Naive thymus-derived CD4-positive, alpha-beta T cell (primary cell): ENCODE measurements at regions of chr14 and their contacts with region 1.

Region 1: DNA sequence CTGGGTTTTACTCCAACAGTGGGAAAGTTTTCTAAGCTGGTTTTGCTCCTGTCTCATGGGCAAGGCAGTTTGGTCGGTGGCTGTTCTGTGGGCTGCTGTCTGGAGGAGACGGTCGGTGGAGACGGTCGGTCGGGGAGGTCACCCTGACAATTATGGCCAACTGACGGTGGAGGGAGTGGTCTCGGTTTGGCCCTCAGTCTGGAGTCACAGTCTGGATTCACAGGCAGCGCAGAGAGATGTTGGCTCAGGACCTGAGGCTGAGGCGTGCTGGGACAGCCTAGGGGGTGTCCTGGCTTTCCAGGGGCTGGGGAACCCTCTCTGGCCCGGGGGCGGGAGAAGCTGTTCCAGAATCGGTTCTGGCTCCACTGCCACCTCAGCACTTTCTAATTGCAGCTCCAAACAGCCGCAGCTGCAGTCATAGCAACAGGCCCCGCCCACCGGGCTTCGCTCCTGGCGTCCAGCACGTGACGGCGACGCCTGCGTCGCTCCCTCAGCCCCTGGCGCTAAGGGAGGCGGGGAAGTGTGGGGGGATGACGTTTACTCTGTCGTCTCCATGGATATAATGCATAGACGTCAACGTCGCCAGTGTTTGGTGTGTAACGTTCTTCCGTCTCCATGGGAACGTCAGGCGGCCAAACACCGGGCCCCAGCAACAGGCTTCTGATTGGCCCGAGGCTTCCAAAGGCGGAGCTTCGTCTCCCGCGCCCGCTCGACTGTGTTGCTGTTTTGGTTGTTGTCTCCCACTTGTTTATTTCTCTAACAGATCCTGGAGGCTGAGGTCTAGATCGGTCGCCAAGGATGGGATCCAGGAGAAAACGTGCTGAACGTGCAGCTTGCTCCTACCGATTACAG is 19.8 kb upstream of the FOS start:
- DNase-seq: peak; percentile 97 to 100 (median 100)
- ATAC-seq: peak; percentile 94
- H3K4me3 ChIP-seq: peak overlapping the region; percentile 75
- H3K4me3 Mint-ChIP-seq: peak overlapping the region; percentile 75 to 95 (median 92)
- H3K27ac ChIP-seq: peak overlapping the region; percentile 94
- H3K27ac Mint-ChIP-seq: peak overlapping the region; percentile 98 to 100 (median 100)
- H3K4me1 ChIP-seq: peaks cover 16 to 19% of the 10 kb centered on the region in 2 donors
- H3K4me1 Mint-ChIP-seq: peaks cover 14 to 50% (median 32%) of the 10 kb centered on the region in 7 donors
- H3K27me3 ChIP-seq: peaks cover 0 to 3% of the 10 kb centered on the region in 2 donors
- H3K27me3 Mint-ChIP-seq: peaks cover 0 to 74% (median 0%) of the 10 kb centered on the region in 5 donors

Region 2: DNA sequence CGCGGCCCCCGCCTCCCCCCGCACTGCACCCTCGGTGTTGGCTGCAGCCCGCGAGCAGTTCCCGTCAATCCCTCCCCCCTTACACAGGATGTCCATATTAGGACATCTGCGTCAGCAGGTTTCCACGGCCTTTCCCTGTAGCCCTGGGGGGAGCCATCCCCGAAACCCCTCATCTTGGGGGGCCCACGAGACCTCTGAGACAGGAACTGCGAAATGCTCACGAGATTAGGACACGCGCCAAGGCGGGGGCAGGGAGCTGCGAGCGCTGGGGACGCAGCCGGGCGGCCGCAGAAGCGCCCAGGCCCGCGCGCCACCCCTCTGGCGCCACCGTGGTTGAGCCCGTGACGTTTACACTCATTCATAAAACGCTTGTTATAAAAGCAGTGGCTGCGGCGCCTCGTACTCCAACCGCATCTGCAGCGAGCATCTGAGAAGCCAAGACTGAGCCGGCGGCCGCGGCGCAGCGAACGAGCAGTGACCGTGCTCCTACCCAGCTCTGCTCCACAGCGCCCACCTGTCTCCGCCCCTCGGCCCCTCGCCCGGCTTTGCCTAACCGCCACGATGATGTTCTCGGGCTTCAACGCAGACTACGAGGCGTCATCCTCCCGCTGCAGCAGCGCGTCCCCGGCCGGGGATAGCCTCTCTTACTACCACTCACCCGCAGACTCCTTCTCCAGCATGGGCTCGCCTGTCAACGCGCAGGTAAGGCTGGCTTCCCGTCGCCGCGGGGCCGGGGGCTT is 19.8 kb after region 1 on chr14 and contains the start of gene FOS:
- CTCF ChIA-PET with region 1: no interaction called
- POLR2A ChIA-PET with region 1: interaction called, 8 read pairs
- intact Hi-C with region 1: loop called (anchors 1 kb)
- DNase-seq: peak; percentile 87 to 99 (median 98)
- ATAC-seq: peak; percentile 74
- H3K4me3 ChIP-seq: peak within 1 kb of the TSS; percentile 86
- H3K4me3 Mint-ChIP-seq: peak within 1 kb of the TSS; percentile 92 to 97 (median 94)
- H3K27ac ChIP-seq: peak within 1 kb of the TSS; percentile 91
- H3K27ac Mint-ChIP-seq: peak within 1 kb of the TSS; percentile 87 to 100 (median 99)
- H3K4me1 ChIP-seq: peaks cover 32 to 34% of the 10 kb centered on the region in 2 donors
- H3K4me1 Mint-ChIP-seq: peaks cover 21 to 64% (median 50%) of the 10 kb centered on the region in 7 donors
- H3K27me3 ChIP-seq: peaks cover 4 to 5% of the 10 kb centered on the region in 2 donors
- H3K27me3 Mint-ChIP-seq: peaks cover 0 to 81% (median 3%) of the 10 kb centered on the region in 5 donors
- total RNA-seq, gene FOS: 9.4 to 4,557 (median 14.4) TPM

Region 3: GRCh38 chr14:75769047-75769685 is 510.3 kb after region 1 on chr14:
- CTCF ChIA-PET with region 1: no interaction called
- POLR2A ChIA-PET with region 1: no interaction called
- intact Hi-C with region 1: no loop called
- DNase-seq: no peak
- ATAC-seq: no peak
- H3K4me3 ChIP-seq: no peak overlapping the region
- H3K4me3 Mint-ChIP-seq: no peak overlapping the region
- H3K27ac ChIP-seq: no peak overlapping the region
- H3K27ac Mint-ChIP-seq: no peak overlapping the region
- H3K4me1 ChIP-seq: no peaks in the 10 kb centered on the region
- H3K4me1 Mint-ChIP-seq: no peaks in the 10 kb centered on the region
- H3K27me3 ChIP-seq: no peaks in the 10 kb centered on the region
- H3K27me3 Mint-ChIP-seq: no peaks in the 10 kb centered on the region